ENCODE measurements at regions of chr15 and their contacts with region 1.

Region 1: DNA sequence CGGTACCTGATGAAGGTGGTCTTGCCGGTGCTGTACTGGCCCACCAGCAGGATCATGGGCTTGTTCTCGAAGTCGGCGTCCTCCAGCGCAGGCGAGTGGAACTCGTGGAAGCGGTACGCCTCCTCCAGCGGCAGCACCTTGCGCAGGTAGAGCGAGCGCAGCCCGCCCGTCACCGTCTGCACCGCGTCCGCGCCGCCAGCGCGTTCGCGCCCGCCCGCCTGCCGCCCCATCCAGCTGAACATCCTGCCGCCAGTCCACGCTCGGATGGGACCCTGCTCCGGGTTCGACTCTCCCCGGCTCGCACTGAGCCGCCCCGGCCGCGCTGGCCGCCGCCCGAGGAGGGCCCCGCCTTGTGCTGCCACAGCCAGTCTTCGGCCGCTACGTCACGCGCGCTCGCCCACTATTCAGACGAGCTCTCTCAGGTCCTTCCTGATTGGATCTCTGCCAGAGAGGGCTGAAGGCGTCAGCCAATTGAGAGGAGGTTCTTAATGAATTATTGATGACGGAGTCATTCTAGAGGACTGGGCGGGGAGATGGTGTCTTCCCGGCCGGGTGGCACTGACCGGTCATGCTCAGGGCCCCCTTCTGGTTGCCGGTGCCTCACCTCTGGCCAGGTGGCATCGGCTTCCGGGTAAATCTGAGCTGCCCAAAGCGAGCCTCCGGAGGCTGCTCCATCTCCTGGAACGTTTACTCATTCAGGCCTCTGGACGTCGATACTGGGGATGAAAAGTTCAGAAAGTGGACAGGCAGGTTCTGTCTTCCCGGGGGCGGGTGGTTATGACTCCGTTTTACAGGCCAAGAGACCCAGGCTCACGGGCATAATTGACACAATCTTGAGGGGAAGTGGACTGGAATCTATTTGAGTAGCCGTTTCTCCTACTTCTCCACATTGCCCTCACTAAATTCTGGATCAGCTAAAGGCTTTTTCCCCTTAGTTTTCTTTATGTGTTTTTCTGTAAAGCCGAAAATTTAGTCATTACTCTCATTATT is at the start of gene EHD4:
- DNase-seq: peak; percentile 85 to 98 (median 93)
- ATAC-seq: peak; percentile 79 to 84
- H3K4me3 Mint-ChIP-seq: peak within 1 kb of the TSS; percentile 87 to 96 (median 93)
- H3K27ac Mint-ChIP-seq: peak within 1 kb of the TSS; percentile 84 to 98 (median 96)
- H3K4me1 Mint-ChIP-seq: peaks cover 18 to 48% (median 41%) of the 10 kb centered on the region in 4 donors
- H3K27me3 Mint-ChIP-seq: peaks cover 3 to 26% (median 8%) of the 10 kb centered on the region in 5 donors
- polyA plus RNA-seq, gene EHD4: 5.2 to 7.6 (median 5.9) TPM

Region 2: DNA sequence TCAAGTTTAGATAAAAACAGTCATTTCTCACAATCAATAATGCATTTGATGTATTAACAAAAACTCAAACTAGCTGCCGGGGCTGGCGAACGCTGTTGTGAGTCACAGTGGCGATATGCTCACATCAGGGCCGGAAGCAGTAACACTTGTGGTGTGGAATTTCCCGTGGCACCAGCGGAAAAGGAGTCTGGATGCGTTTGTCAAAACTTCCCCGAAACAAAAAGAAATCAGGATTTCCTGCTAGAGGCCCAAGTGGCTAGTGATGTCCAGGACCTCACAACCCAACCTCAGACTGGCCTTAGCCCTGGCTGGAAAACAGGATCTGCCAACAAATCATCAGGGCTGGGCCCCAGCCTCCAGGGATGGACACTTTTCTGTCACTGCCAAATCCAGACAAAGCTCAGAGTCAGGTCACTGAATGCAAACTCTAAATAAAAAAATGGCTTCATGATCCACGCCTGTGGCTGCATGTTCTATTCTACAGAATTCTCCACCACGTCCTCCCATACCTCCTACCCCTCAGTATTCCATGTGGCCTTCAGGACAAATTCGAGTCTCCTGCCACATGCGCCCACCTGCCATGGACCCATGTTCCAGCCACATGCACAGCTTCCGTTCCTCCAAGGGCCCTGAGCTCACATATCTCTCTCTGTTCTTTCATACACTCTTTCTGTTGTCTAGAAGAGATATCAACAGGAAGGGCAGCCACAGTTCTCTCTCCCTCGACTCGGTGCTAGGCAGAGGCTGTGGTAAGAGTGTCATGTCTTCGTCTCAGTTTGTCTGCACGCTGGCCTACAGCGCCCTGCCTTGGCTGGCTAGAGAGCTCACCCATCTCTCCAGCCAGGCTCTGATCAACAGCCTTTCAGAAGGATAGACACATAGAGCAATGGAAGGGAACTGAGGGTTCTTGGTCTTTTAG is 35.6 kb before region 1 on chr15:
- POLR2A ChIA-PET with region 1: interaction called, 59 read pairs
- DNase-seq: peak; percentile 35 to 85 (median 70)
- ATAC-seq: peak; percentile 86 to 89
- H3K4me3 Mint-ChIP-seq: peak overlapping the region; percentile 20 to 89 (median 76)
- H3K27ac Mint-ChIP-seq: peak overlapping the region; percentile 93 to 100 (median 98)
- H3K4me1 Mint-ChIP-seq: peaks cover 27 to 69% (median 56%) of the 10 kb centered on the region in 4 donors
- H3K27me3 Mint-ChIP-seq: no peaks in the 10 kb centered on the region

Measured in naive thymus-derived CD8-positive, alpha-beta T cell (primary cell).